ENCODE measurements at regions of chr3 and their contacts with region 1.

Region 1: GRCh38 chr3:126357295-126358037 is at the start of gene KLF15:
- DNase-seq: peak; percentile 81 to 91
- ATAC-seq: peak; percentile 64 to 85 (median 73)
- H3K4me3 ChIP-seq: peak within 1 kb of the TSS; percentile 39 to 99 (median 74)
- H3K27ac ChIP-seq: peak within 1 kb of the TSS; percentile 76 to 99 (median 94)
- H3K4me1 ChIP-seq: peaks cover 17 to 54% (median 41%) of the 10 kb centered on the region in 9 donors
- H3K27me3 ChIP-seq: peaks cover 0 to 70% (median 8%) of the 10 kb centered on the region in 7 donors
- CTCF ChIP-seq: no peak
- total RNA-seq, gene KLF15: 13.5 to 57.1 (median 27.1) TPM

Region 2: GRCh38 chr3:126267226-126267975 is 90.1 kb before region 1 on chr3:
- intact Hi-C with region 1: loop called in 7 of 10 experiments (anchors 1 to 10 kb)
- DNase-seq: peak; percentile 45 to 77
- ATAC-seq: peak; percentile 67 to 83 (median 79)
- H3K4me3 ChIP-seq: peak overlapping the region in 9 of 10 donors; percentile 19 to 56 (median 45)
- H3K27ac ChIP-seq: peak overlapping the region; percentile 71 to 94 (median 88)
- H3K4me1 ChIP-seq: peaks cover 5 to 43% (median 27%) of the 10 kb centered on the region in 9 donors
- H3K27me3 ChIP-seq: peaks cover 0 to 18% (median 0%) of the 10 kb centered on the region in 7 donors
- CTCF ChIP-seq: peak in 4 of 9 donors; percentile 6 to 46 (median 36)

Region 3: DNA sequence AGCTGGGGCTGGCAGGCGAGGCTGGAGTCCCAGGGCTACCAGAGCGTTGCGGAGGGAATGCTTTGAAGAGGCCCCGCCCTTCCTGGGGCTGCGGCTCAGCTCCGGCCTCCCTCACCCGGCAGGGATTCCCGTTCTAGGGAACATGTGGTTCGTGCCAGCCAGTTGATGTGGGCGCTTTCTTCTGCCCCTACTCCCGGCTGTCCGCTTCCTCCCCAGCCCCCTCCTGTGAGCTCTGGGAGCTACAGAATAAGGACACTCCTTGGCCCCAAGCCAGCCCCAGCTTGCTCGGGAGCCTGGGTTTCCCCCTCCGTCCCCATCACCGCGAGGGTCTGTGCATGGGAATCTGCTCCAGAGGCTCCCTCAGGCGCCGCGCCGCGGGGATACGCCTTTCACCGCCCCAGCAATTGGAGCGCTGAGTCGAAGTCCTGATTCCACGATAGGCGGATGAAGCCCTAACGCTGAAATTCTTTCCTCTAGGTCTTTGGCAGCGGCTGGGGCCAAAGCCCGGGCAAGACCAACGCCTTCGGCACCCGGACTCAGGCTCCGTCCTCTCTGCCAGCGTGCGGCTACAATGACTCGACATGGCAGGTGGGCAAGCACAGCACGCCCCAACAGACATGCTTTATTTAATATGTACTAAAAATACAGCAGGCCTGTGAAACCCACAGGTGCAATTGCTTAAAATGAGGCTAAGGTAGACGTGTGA is 69.8 kb before region 1 on chr3:
- intact Hi-C with region 1: loop called in 3 of 10 experiments (anchors 5 kb)
- DNase-seq: peak; percentile 62 to 71
- ATAC-seq: peak; percentile 82 to 96 (median 93)
- H3K4me3 ChIP-seq: peak overlapping the region; percentile 14 to 57 (median 49)
- H3K27ac ChIP-seq: peak overlapping the region; percentile 63 to 88 (median 80)
- H3K4me1 ChIP-seq: peaks cover 0 to 30% (median 17%) of the 10 kb centered on the region in 9 donors
- H3K27me3 ChIP-seq: peaks cover 0 to 46% (median 3%) of the 10 kb centered on the region in 7 donors
- CTCF ChIP-seq: no peak

Region 4: GRCh38 chr3:126389112-126389793 is 31.8 kb after region 1 on chr3:
- intact Hi-C with region 1: loop called in 4 of 10 experiments (anchors 1 to 2 kb)
- DNase-seq: peak; percentile 85 to 90
- ATAC-seq: peak; percentile 94 to 98 (median 96)
- H3K4me3 ChIP-seq: peak overlapping the region; percentile 11 to 64 (median 49)
- H3K27ac ChIP-seq: peak overlapping the region; percentile 28 to 87 (median 79)
- H3K4me1 ChIP-seq: peaks cover 0 to 11% (median 5%) of the 10 kb centered on the region in 9 donors
- H3K27me3 ChIP-seq: peaks cover 0 to 23% (median 4%) of the 10 kb centered on the region in 7 donors
- CTCF ChIP-seq: peak; percentile 89 to 100 (median 97)

Region 5: DNA sequence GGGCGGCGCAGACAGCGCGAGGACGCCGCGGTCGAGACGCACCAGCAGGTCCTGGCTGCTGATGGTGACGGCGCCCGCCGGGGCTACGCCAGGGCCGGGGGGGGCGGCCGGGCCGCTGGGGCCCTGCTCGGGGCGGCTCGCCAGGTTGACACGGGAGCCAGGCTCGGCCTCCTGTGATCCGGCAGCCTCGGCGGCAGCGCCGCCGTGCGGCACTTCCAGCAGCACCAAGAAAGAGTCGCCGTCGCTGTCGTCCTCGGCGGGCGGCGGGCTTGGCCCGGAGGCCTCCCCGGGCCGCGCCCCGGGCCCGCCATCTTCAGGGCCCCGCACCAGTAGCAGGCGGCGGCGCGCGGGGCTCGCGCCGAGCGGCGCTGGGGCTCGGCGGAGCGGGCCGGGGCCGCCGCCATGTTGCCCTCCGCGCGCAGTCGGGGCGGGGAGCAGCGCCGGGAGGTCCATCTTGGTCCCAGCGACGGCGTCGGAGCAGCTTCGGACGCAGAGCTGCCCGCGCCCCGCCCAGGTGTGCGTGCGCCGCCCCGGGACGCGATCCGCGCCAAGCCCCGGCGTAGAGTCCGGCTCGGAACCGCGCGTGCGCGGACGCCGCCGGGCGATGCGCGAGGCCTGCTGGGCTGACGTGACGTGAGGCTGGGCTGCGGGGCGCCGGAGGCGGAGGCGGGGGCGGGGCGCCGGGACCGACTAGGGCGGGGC is 118.1 kb after region 1 on chr3 and contains the start of gene ZXDC:
- intact Hi-C with region 1: loop called in 1 of 10 experiments (anchors 2 kb)
- DNase-seq: peak; percentile 92 to 97
- ATAC-seq: peak; percentile 86 to 96 (median 93)
- H3K4me3 ChIP-seq: peak within 1 kb of the TSS; percentile 62 to 95 (median 80)
- H3K27ac ChIP-seq: peak within 1 kb of the TSS; percentile 83 to 99 (median 92)
- H3K4me1 ChIP-seq: peaks cover 28 to 51% (median 43%) of the 10 kb centered on the region in 9 donors
- H3K27me3 ChIP-seq: no peaks in the 10 kb centered on the region
- CTCF ChIP-seq: peak in 7 of 9 donors; percentile 26 to 74 (median 52)
- total RNA-seq, gene ZXDC: 15.2 to 25.4 (median 19.7) TPM

Measured in heart right ventricle (tissue), 16 donors.